ENCODE measurements at regions of chr7 and their contacts with region 1.

Region 1: GRCh38 chr7:139777948-139778841 is at the start of gene HIPK2:
- DNase-seq: peak; percentile 92
- H3K4me3 Mint-ChIP-seq: peak within 1 kb of the TSS; percentile 99
- H3K27ac Mint-ChIP-seq: peak within 1 kb of the TSS; percentile 99
- H3K4me1 Mint-ChIP-seq: peaks cover 50% of the 10 kb centered on the region
- H3K27me3 Mint-ChIP-seq: peaks cover 20% of the 10 kb centered on the region
- total RNA-seq, gene HIPK2: 23.9 and 26.1 TPM in 2 replicates

Region 2: GRCh38 chr7:139359366-139360209 is 418.6 kb before region 1 on chr7 and contains the start of gene LUC7L2:
- intact Hi-C with region 1: loop called (anchors 10 kb)
- DNase-seq: peak; percentile 100
- H3K4me3 Mint-ChIP-seq: peak within 1 kb of the TSS; percentile 97
- H3K27ac Mint-ChIP-seq: peak within 1 kb of the TSS; percentile 100
- H3K4me1 Mint-ChIP-seq: peaks cover 28% of the 10 kb centered on the region
- H3K27me3 Mint-ChIP-seq: no peaks in the 10 kb centered on the region
- total RNA-seq, gene LUC7L2: 164 and 172 TPM in 2 replicates

Region 3: GRCh38 chr7:139758388-139758787 is 19.8 kb before region 1 on chr7:
- intact Hi-C with region 1: loop called (anchors 2 kb)
- DNase-seq: no peak
- H3K4me3 Mint-ChIP-seq: no peak overlapping the region
- H3K27ac Mint-ChIP-seq: no peak overlapping the region
- H3K4me1 Mint-ChIP-seq: peaks cover 48% of the 10 kb centered on the region
- H3K27me3 Mint-ChIP-seq: no peaks in the 10 kb centered on the region

Region 4: GRCh38 chr7:139915864-139916716 is 137.9 kb after region 1 on chr7:
- intact Hi-C with region 1: loop called (anchors 1 kb)
- DNase-seq: peak; percentile 86
- H3K4me3 Mint-ChIP-seq: peak overlapping the region; percentile 45
- H3K27ac Mint-ChIP-seq: peak overlapping the region; percentile 59
- H3K4me1 Mint-ChIP-seq: peaks cover 23% of the 10 kb centered on the region
- H3K27me3 Mint-ChIP-seq: peaks cover 7% of the 10 kb centered on the region

Region 5: DNA sequence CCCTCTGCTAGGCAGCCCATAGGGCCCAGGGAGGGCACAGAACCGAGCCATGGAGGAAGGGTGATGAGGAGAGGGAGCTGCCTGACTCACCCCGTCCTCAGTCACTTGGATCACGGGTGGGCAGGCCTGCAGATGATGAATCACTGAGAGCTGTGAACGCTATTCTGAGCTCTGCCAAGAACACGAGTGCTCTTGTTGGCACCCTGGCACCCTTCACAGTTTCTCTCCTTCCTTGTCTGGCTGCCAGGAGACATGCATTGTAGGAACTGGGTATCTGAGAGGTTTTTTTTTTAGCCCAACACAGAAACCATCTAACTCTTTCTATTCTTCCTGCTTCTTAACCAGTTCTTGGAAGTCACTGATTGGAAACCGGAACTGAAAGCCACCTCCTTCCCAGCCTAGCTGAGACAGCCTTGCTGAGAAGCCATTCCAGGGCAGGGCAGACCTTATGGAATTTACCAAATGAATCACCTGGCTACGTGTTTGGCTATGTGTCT is 538.0 kb after region 1 on chr7:
- intact Hi-C with region 1: loop called (anchors 10 kb)
- DNase-seq: peak; percentile 62
- H3K4me3 Mint-ChIP-seq: peak overlapping the region; percentile 39
- H3K27ac Mint-ChIP-seq: peak overlapping the region; percentile 65
- H3K4me1 Mint-ChIP-seq: peaks cover 40% of the 10 kb centered on the region
- H3K27me3 Mint-ChIP-seq: no peaks in the 10 kb centered on the region

Region 6: DNA sequence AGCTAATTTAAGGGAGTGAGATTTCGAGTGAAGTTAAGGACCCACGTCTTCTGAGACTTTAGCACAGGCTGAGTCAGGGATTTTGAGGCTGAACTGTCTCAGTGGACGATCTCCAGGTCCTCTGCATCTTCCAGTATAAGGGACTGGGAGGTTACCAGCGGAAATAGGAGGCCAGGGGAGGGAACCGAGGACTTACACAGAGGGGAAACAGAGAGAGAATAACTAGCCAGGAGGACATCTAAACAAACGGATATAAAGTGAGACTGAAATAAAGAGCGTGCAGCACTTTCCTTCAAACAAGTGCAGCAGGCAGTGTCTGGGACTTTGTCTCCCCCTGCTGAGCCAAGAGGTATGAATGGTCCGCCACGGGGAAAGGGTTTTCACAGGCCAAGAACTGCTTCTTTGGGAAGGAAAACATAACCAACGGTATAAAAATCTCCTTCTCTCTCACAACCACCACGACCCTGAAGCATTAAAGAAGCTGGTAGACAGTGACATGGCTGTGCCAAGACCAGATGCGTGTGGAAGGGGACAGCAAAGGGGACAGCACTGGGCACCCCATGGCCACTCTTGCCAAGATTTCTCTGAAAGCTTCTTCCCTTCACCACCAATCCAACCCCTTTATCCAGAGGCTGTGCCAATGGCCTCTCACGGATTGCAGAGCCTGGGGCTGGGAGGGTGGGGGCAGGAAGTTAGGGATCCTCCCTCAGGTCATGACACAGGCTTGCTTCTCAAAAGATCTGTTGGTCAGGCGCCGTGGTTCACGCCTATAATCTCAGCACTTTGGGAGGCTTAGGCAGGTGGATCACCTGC is 548.1 kb after region 1 on chr7:
- intact Hi-C with region 1: no loop called
- DNase-seq: peak; percentile 87
- H3K4me3 Mint-ChIP-seq: no peak overlapping the region
- H3K27ac Mint-ChIP-seq: no peak overlapping the region
- H3K4me1 Mint-ChIP-seq: no peaks in the 10 kb centered on the region
- H3K27me3 Mint-ChIP-seq: no peaks in the 10 kb centered on the region